AG04450 (cell line): ENCODE measurements at regions of chr7 and their contacts with region 1.

Region 1: DNA sequence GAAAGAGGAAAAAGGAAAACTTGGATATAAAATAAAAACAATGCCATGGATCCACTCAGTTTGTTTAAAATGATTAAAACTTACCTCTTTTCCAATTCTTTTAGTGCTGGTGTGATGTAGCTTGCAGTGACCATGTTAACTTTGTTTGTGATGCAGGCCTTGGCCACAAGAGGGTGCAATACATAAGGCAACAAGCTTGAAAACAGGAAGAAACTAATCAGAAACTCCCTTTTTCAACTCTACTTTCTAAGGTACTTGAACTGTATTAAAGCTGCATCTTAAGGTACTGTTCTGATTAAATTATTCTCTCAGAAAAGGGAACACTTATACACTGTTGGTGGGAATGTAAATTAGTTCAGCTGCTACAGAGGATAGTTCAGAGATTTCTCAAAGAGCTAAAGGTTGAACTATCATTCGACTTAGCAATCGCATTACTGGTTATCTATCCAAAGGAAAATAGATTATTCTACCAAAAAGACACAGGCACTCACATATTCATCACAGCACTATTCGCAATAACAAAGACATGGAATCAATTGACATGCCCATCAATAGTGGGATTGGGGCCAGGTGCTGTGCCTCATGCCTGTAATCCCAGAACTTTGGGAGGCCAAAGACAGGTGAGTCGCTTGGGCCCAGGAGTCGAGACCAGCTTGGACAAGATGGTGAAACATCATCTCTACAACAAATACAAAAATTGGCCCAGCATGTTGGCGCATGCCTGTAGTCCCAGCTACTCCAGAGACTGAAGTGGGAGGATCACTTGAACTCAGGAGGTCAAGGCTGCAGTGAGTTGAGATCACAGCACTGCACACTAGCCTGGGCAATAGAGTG is 50.9 kb downstream of the AASS start:
- DNase-seq: peak; percentile 63
- H3K4me3 ChIP-seq: no peak overlapping the region
- H3K27ac ChIP-seq: no peak overlapping the region
- H3K27me3 ChIP-seq: no peaks in the 10 kb centered on the region
- CTCF ChIP-seq: peak; percentile 97

Region 2: GRCh38 chr7:122070834-122071233 is 22.3 kb before region 1 on chr7:
- CTCF ChIA-PET with region 1: interaction called, 10 read pairs
- POLR2A ChIA-PET with region 1: no interaction called
- DNase-seq: no peak
- H3K4me3 ChIP-seq: no peak overlapping the region
- H3K27ac ChIP-seq: no peak overlapping the region
- H3K27me3 ChIP-seq: no peaks in the 10 kb centered on the region
- CTCF ChIP-seq: no peak

Region 3: GRCh38 chr7:122123746-122124145 is 30.6 kb after region 1 on chr7:
- CTCF ChIA-PET with region 1: interaction called, 16 read pairs
- POLR2A ChIA-PET with region 1: no interaction called
- DNase-seq: no peak
- H3K4me3 ChIP-seq: no peak overlapping the region
- H3K27ac ChIP-seq: no peak overlapping the region
- H3K27me3 ChIP-seq: no peaks in the 10 kb centered on the region
- CTCF ChIP-seq: no peak

Region 4: DNA sequence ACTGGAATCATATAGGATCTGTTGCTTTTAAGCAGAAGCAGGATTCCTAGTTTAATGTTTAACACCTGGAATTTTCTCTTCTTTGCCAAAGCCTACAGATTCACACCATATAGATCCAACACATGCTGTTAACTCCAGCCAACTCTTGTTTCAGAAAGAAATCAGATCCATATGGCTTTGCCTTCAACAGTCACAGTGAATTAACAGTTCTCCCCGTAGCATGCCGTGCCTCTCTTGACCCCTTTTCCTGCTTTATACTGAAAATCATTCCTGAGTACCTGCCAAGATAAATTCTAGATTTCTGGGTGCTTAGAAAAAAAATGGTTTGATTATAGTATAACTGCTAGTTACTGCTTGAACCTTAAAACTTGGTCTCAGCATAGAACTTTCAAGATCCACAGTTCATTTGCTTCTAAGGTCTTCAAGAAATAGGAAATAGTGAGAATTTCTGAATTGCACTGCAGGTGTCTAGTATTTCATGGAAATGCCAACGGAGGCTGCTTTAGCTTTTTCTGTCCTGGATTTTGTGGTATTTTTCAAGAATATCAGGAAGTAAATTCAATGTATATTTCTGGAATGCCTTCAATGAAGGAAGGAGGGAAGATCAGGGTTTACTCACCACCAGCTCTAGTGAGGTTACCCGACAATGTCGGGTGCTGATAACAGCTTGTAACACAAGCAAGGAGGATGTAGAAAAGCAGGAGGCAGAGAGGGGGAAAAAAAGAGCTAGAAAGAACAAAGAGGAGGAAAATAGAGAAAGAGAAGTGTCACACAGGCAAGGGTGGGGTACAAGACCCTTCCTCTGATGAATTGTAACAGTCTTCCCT is 44.3 kb after region 1 on chr7:
- CTCF ChIA-PET with region 1: interaction called, 18 read pairs
- POLR2A ChIA-PET with region 1: no interaction called
- DNase-seq: no peak
- H3K4me3 ChIP-seq: peak overlapping the region; percentile 39
- H3K27ac ChIP-seq: peak overlapping the region; percentile 22
- H3K27me3 ChIP-seq: no peaks in the 10 kb centered on the region
- CTCF ChIP-seq: no peak

Region 5: GRCh38 chr7:122528879-122529481 is 435.8 kb after region 1 on chr7:
- CTCF ChIA-PET with region 1: interaction called, 11 read pairs
- POLR2A ChIA-PET with region 1: no interaction called
- DNase-seq: no peak
- H3K4me3 ChIP-seq: no peak overlapping the region
- H3K27ac ChIP-seq: no peak overlapping the region
- H3K27me3 ChIP-seq: no peaks in the 10 kb centered on the region
- CTCF ChIP-seq: peak; percentile 57